Breast epithelium (tissue), 4 donors: ENCODE measurements at regions of chr1 and their contacts with region 1.

Region 1: DNA sequence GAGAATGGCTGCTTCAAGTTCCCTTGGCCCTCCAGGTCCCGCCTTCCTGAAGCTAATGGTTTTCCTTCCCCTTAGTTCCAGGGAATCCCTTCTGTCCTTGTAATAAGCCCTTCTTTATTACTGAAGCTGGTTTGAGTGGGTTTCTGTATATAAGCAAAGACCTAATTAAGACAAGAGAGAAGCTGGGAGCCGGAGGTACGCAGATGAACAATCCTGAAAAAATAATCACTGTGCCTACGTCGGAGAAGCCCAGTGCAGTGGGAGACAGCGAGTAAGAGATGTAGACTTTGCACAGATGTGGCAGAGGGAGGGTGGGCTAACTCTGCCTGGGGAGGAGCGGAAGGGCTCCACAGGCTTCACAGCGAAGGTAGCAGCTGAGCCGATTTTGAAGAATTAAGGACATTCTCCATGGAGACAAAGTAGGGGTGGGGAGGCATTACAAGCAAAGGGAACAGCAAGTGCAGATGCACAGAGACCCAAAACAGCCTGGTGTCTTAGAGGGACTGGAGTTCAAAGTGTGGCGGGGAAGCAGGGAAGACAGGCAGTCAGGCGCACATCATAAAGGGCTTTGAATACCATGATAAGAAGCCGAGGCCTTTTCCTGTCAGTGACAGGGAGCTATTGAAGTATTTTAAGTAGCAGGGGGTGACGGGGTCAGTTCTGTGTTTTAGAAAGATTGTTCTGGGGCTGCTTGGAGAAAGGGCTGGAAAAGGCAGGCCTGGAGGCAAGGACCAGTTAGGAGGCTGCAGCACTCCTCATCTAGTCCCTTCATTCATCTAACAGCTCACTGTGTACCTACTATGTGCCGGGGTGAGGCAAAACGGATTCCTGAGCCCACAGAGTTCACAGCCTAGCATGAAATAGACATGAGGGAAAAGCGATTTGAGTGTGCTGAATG is 6.5 kb downstream of the RIMS3 start:
- DNase-seq: no peak
- H3K4me3 ChIP-seq: no peak overlapping the region
- H3K27ac ChIP-seq: no peak overlapping the region
- H3K4me1 ChIP-seq: no peaks in the 10 kb centered on the region
- H3K27me3 ChIP-seq: no peaks in the 10 kb centered on the region
- CTCF ChIP-seq: no peak
- POLR2A ChIP-seq: no peak

Region 2: GRCh38 chr1:40640314-40641076 is 18.5 kb before region 1 on chr1:
- intact Hi-C with region 1: loop called (anchors 1 kb)
- DNase-seq: no peak
- H3K4me3 ChIP-seq: no peak overlapping the region
- H3K27ac ChIP-seq: no peak overlapping the region
- H3K4me1 ChIP-seq: no peaks in the 10 kb centered on the region
- H3K27me3 ChIP-seq: no peaks in the 10 kb centered on the region
- CTCF ChIP-seq: no peak
- POLR2A ChIP-seq: no peak

Region 3: DNA sequence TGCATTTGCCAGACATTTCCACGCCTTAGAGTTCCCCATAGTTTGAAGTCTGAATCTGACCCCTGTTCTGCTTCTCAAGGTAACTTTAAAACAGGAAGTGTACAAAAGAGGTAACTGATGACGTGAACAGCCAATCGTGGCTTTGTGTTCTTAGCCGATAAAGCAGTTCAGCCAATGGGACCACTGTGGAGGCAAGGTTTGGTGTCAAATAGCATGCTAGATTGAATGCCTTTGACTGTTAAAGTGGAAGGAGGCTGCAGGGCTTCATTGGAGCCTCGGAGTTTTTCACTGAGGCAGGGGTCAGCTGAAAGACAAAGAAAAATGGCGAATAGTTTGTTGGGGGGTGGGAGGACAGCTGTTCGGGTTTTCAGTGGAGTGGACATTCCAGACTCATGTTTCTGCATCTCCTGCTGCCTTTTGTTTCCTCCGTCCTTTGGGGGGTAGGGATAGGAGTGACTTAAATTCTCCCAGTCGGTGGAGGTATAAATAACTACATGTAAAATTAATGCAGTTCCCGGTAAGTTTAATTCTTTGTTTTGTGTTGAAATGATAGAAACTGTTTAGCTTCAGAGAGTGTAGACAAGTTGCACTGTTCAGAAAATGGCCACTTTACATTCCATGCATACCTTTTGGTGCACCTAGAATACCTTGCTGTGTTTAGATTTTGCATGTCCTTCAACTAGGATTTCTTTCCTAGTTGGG is 50.3 kb after region 1 on chr1:
- intact Hi-C with region 1: no loop called
- DNase-seq: peak; percentile 65 to 87
- H3K4me3 ChIP-seq: peak overlapping the region; percentile 44 to 65 (median 58)
- H3K27ac ChIP-seq: peak overlapping the region; percentile 46 to 79
- H3K4me1 ChIP-seq: peaks cover 0 to 15% of the 10 kb centered on the region in 2 donors
- H3K27me3 ChIP-seq: no peaks in the 10 kb centered on the region
- CTCF ChIP-seq: no peak
- POLR2A ChIP-seq: no peak

Region 4: GRCh38 chr1:40722636-40723035 is 63.6 kb after region 1 on chr1:
- intact Hi-C with region 1: no loop called
- DNase-seq: no peak
- H3K4me3 ChIP-seq: no peak overlapping the region
- H3K27ac ChIP-seq: peak overlapping the region; percentile 49 to 82
- H3K4me1 ChIP-seq: peaks cover 0 to 26% of the 10 kb centered on the region in 2 donors
- H3K27me3 ChIP-seq: no peaks in the 10 kb centered on the region
- CTCF ChIP-seq: no peak
- POLR2A ChIP-seq: no peak

Region 5: GRCh38 chr1:40783001-40783905 is 124.3 kb after region 1 on chr1 and contains the start of gene KCNQ4:
- intact Hi-C with region 1: no loop called
- DNase-seq: peak; percentile 56 to 62
- H3K4me3 ChIP-seq: peak within 1 kb of the TSS; percentile 41 to 81 (median 54)
- H3K27ac ChIP-seq: peak within 1 kb of the TSS; percentile 55 to 64
- H3K4me1 ChIP-seq: peaks cover 6 to 11% of the 10 kb centered on the region in 2 donors
- H3K27me3 ChIP-seq: no peaks in the 10 kb centered on the region
- CTCF ChIP-seq: no peak
- POLR2A ChIP-seq: no peak
- total RNA-seq, gene KCNQ4: 0.32 to 1.3 (median 1.3) TPM